Ascending aorta (tissue), 2 donors: ENCODE measurements at regions of chr1 and their contacts with region 1.

Region 1: DNA sequence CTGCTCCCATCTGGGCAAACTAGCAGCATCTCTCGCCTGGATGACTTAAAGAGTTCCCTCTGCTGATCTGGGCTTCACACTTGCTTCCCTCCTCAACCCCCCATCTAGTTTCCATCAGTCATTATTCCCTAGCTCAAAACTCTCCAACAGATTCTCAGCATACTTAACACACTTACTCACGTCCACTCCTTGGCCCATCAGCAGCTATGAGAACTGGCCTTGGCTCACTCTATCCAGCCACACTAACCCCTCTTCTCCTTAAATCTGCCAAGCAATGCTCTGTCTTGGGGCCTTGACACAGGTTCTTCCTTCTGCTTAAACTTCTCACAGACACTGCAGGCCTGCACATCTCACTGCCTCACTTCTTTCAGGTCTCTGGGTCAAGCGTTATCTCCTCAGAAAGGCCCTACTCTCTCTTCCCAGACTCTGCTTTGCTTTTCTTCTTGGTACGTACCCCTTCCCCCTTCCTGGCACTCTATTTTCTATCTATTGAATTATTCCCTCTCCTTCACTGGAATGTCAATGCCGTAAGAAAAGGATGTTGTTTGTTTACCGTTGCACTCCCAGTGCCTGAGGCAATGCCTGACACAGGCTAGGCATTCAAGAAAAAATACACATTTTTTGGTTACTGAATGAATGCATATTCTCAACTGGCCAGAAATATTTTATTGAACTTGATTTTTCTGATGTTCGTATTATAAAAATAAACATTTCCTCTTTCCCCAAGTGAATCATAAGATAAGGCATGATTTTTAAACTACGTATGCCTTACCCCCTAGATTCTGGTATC is 41.4 kb downstream of the GNG12 start:
- DNase-seq: peak in 1 of 2 donors; percentile 77
- H3K4me3 ChIP-seq: no peak overlapping the region
- H3K27ac ChIP-seq: peak overlapping the region; percentile 77 to 80
- H3K4me1 ChIP-seq: peaks cover 20 to 78% of the 10 kb centered on the region in 2 donors
- H3K27me3 ChIP-seq: no peaks in the 10 kb centered on the region
- CTCF ChIP-seq: no peak

Region 2: DNA sequence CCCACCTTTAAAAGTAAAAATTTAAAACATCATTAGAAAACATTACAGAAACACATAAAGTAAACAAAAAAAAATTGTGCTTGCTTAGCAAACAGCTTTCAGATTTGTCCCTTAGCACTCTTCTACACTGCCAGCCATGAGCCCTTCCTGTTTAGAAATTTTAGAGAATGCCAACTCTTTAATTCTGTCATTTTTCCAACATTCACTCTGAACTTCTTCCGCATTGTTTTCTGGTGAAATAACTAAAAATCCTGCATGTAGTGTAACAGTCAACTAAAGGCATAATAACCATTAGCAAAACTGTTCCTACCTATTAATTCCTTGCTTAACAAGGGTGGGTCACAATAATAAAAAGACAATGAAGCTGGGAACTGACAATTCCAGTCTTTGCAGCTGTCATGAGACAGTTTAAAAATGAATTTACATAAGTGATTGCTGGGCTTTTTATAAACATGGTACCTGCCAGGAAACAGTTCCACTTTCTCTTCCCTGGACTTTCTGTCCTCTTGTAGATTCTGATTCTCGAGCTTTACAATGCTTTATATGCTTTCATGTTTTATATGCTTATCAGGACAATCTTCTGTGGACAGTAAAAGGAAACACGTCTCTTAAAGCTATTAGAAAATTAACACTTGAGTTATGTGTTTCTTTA is 22.4 kb after region 1 on chr1:
- intact Hi-C with region 1: loop called (anchors 2 kb)
- DNase-seq: no peak
- H3K4me3 ChIP-seq: peak overlapping the region in 1 of 2 donors; percentile 9
- H3K27ac ChIP-seq: peak overlapping the region; percentile 85 to 90
- H3K4me1 ChIP-seq: peaks cover 11 to 65% of the 10 kb centered on the region in 2 donors
- H3K27me3 ChIP-seq: no peaks in the 10 kb centered on the region
- CTCF ChIP-seq: no peak